ENCODE measurements at regions of chr22 and their contacts with region 1.

Region 1: DNA sequence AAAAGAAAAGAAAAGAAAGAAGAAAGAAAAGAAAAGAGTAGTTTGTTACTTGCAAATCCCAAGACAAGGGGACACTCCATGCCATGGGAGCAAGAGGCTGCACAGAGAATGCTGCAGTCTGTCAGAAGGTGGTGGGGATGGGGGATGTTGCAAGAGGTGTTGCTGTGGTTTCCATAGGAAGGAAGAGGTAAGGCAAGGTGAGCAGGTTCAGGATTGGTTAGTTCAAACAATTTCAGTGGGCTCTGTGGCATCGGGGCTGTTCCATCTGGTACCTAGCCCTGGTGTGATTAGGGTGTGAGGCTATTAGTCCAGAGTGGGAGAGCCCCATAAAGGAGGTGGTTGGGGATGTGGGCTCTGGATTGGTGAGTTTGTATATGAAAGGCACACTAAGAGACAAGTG is 172.7 kb downstream of the BCR start:
- DNase-seq: no peak
- ATAC-seq: no peak
- H3K4me3 ChIP-seq: no peak overlapping the region
- H3K4me3 Mint-ChIP-seq: no peak overlapping the region
- H3K27ac ChIP-seq: no peak overlapping the region
- H3K27ac Mint-ChIP-seq: no peak overlapping the region
- H3K4me1 ChIP-seq: no peaks in the 10 kb centered on the region
- H3K4me1 Mint-ChIP-seq: peaks cover 4% of the 10 kb centered on the region
- H3K27me3 ChIP-seq: peaks cover 0 to 2% of the 10 kb centered on the region in 2 experiments
- H3K27me3 Mint-ChIP-seq: peaks cover 14% of the 10 kb centered on the region
- CTCF ChIP-seq: no peak

Region 2: DNA sequence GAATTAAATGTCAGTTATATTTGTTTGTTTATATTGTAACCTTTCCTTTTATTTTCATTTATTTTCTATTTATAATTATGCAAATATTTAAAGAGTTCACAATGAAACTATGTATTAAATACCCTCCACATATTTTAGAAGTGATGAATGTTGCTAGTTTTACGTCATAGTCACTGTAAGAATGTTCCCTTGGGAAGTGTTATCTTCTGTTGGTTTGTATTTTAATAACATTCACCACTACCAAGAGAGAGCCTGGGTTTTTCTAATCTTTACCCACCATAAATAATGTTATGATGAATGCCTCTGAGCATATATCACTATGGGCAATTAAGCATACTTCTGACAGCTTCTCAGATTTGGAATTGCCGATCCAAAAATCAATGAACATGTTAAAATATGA is 1330.7 kb after region 1 on chr22:
- CTCF ChIA-PET with region 1: no interaction called
- POLR2A ChIA-PET with region 1: no interaction called
- intact Hi-C with region 1: loop called in 1 of 2 experiments (anchors 10 kb)
- DNase-seq: no peak
- ATAC-seq: no peak
- H3K4me3 ChIP-seq: no peak overlapping the region
- H3K4me3 Mint-ChIP-seq: no peak overlapping the region
- H3K27ac ChIP-seq: no peak overlapping the region
- H3K27ac Mint-ChIP-seq: no peak overlapping the region
- H3K4me1 ChIP-seq: no peaks in the 10 kb centered on the region
- H3K4me1 Mint-ChIP-seq: no peaks in the 10 kb centered on the region
- H3K27me3 ChIP-seq: peaks cover 0 to 4% of the 10 kb centered on the region in 2 experiments
- H3K27me3 Mint-ChIP-seq: peaks cover 39% of the 10 kb centered on the region
- CTCF ChIP-seq: no peak